Mammary epithelial cell (primary cell): ENCODE measurements at regions of chr7 and their contacts with region 1.

Region 1: GRCh38 chr7:41107668-41108448 is 595.0 kb downstream of the INHBA start:
- DNase-seq: peak; percentile 99
- H3K4me3 ChIP-seq: peak overlapping the region in 1 of 3 experiments; percentile 10
- H3K27ac ChIP-seq: peak overlapping the region; percentile 100
- H3K4me1 ChIP-seq: peaks cover 47% of the 10 kb centered on the region
- H3K27me3 ChIP-seq: no peaks in the 10 kb centered on the region
- CTCF ChIP-seq: no peak

Region 2: DNA sequence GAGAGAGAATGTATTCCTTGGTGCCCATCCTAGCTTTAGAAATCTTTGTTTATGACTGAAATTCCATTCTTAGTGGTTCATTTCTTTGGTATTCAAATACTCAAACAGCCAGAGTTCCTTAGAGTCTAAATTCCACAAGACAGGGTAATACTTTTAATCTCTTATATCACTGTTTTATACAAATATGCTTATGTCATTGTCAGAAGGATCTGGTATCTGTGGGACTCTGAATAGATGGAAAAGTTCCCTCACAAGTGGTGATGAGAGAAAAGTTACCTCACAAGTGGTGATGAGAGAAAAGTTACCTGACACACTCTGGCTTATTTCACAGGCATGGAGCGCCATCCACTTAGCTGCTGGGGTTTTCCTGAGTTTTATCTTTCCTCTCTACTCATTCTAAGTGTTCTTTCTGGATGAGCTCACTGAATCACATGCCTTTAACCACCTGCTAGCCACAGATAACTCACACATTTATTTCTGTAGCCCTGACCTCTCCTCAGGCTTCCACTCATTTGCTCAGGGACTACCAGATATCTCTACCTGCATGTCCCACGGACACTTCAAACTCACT is 189.1 kb before region 1 on chr7:
- CTCF ChIA-PET with region 1: no interaction called
- dilution Hi-C with region 1: loop called (anchors 10 kb)
- in situ Hi-C with region 1: no loop called
- intact Hi-C with region 1: loop called (anchors 2 kb)
- DNase-seq: peak; percentile 93
- H3K4me3 ChIP-seq: no peak overlapping the region
- H3K27ac ChIP-seq: peak overlapping the region; percentile 65
- H3K4me1 ChIP-seq: peaks cover 34% of the 10 kb centered on the region
- H3K27me3 ChIP-seq: no peaks in the 10 kb centered on the region
- CTCF ChIP-seq: no peak

Region 3: DNA sequence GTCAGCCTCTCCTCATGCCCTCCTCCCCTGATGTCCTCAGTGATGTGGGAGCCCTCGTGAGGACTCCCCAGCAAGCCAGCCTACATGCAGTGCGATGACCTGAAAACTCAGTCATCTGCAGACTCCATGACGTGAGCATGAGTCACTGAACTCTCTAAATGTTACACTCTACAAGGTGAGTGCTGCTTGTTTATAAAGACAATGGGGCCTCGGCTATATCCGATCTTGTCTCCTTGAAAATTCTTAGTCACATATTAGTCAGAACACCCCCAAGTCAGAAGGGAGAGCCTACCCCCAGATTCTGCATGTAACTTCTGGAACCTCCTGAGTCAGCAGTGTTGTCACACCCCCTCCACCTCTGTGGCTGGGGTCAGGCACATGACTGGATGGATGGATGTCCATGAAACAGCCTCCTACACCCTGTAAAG is 78.8 kb before region 1 on chr7:
- CTCF ChIA-PET with region 1: no interaction called
- dilution Hi-C with region 1: no loop called
- in situ Hi-C with region 1: no loop called
- intact Hi-C with region 1: loop called (anchors 2 kb)
- DNase-seq: peak; percentile 100
- H3K4me3 ChIP-seq: no peak overlapping the region
- H3K27ac ChIP-seq: peak overlapping the region; percentile 87
- H3K4me1 ChIP-seq: peaks cover 45% of the 10 kb centered on the region
- H3K27me3 ChIP-seq: no peaks in the 10 kb centered on the region
- CTCF ChIP-seq: no peak

Region 4: GRCh38 chr7:41148521-41148951 is 40.7 kb after region 1 on chr7:
- CTCF ChIA-PET with region 1: no interaction called
- dilution Hi-C with region 1: no loop called
- in situ Hi-C with region 1: no loop called
- intact Hi-C with region 1: loop called (anchors 1 kb)
- DNase-seq: peak; percentile 98
- H3K4me3 ChIP-seq: no peak overlapping the region
- H3K27ac ChIP-seq: peak overlapping the region; percentile 99
- H3K4me1 ChIP-seq: peaks cover 46% of the 10 kb centered on the region
- H3K27me3 ChIP-seq: no peaks in the 10 kb centered on the region
- CTCF ChIP-seq: no peak

Region 5: GRCh38 chr7:41224063-41224806 is 116.4 kb after region 1 on chr7:
- CTCF ChIA-PET with region 1: no interaction called
- dilution Hi-C with region 1: no loop called
- in situ Hi-C with region 1: no loop called
- intact Hi-C with region 1: loop called (anchors 2 kb)
- DNase-seq: peak; percentile 98
- H3K4me3 ChIP-seq: no peak overlapping the region
- H3K27ac ChIP-seq: peak overlapping the region; percentile 93
- H3K4me1 ChIP-seq: peaks cover 32% of the 10 kb centered on the region
- H3K27me3 ChIP-seq: no peaks in the 10 kb centered on the region
- CTCF ChIP-seq: no peak

Region 6: DNA sequence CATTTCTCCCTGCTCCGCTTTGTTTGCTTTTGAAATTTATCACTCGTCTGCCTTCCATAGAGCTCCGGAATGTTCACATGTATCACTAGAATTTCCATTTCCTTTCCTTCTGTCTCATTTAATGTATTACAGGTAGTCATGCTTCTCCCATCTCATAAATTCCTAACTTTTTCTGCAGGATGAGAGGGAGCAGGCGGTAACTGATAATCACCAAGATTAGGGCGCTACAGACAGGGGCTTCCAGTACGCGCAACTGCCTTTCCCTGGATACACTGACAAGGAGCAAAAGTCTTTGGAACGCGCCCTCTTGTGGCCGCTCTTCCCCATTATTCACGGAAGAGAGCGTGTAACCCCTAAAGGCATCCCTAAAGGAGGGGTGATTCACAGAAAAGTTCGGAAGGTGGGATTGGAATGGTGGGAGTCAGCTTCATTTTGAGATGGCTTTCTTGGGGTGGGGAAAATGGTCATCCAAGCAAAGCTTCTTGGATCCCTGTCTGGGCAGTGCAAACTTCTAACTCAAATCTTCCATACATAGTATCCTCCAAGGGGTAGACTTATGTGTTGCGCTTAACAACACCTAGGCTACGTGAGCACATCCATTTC is 588.6 kb after region 1 on chr7:
- CTCF ChIA-PET with region 1: no interaction called
- dilution Hi-C with region 1: loop called (anchors 5 kb)
- in situ Hi-C with region 1: loop called in 1 of 2 experiments (anchors 10 kb)
- intact Hi-C with region 1: no loop called
- DNase-seq: peak; percentile 85
- H3K4me3 ChIP-seq: peak overlapping the region; percentile 70 to 92 (median 89)
- H3K27ac ChIP-seq: peak overlapping the region; percentile 87
- H3K4me1 ChIP-seq: peaks cover 29% of the 10 kb centered on the region
- H3K27me3 ChIP-seq: no peaks in the 10 kb centered on the region
- CTCF ChIP-seq: peak; percentile 47 to 73